Activated naive CD4-positive, alpha-beta T cell treated with anti-CD3 and anti-CD28 coated beads for 36 hours (primary cell): ENCODE measurements at regions of chr1 and their contacts with region 1.

Region 1: DNA sequence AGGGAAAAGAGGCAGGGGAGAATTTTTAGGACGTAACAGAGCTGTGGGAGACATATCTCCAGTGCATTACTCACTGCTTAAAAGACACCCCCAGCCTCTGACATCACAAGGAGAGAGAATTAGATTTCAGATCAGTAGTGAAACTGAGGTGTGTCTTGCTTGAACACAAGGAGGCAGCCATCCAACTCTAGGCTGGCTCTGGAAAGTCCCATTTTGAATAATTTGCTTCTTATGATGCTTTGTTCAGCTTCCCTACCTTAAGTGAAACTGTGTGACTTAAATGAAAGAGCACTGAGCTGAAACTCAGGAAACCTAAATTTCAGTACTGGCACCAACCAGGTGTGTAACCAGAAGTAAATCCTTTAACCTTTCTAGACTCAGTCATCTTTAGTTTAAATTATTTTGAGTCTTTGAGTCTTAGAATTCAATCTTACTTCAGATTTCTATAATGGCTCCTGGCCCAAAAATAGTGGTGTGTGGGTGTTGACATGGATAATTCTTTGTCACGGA is 251.6 kb upstream of the SGIP1 start:
- DNase-seq: peak; percentile 89
- H3K4me3 Mint-ChIP-seq: peak overlapping the region; percentile 17
- H3K27ac Mint-ChIP-seq: peak overlapping the region; percentile 89
- H3K4me1 Mint-ChIP-seq: peaks cover 87% of the 10 kb centered on the region
- H3K27me3 Mint-ChIP-seq: no peaks in the 10 kb centered on the region

Region 2: GRCh38 chr1:64966158-64966971 is 1316.0 kb before region 1 on chr1 and contains the start of gene JAK1:
- CTCF ChIA-PET with region 1: no interaction called
- intact Hi-C with region 1: loop called (anchors 10 kb)
- DNase-seq: peak; percentile 87
- H3K4me3 Mint-ChIP-seq: peak within 1 kb of the TSS; percentile 89
- H3K27ac Mint-ChIP-seq: peak within 1 kb of the TSS; percentile 90
- H3K4me1 Mint-ChIP-seq: peaks cover 46% of the 10 kb centered on the region
- H3K27me3 Mint-ChIP-seq: no peaks in the 10 kb centered on the region
- total RNA-seq, gene JAK1: 139 to 140 TPM

Region 3: DNA sequence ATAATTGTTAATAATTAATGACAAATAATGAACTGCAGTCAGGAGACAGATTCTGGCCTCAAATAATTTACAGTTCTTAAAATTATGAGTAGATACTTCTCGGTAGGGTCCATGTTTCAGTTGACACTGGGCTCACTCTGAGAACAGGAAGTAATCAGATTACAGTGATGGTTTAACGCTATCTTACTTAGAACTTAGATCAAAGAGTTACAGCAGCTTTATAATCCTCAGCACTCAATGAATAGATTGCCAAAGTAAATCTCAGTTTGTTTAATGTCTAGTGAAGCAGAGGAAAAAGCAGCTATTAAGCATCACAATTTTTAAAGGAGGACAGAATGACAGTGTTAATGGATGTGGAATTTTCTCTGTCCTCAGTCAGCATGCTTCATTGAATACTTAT is 410.1 kb before region 1 on chr1:
- CTCF ChIA-PET with region 1: no interaction called
- intact Hi-C with region 1: no loop called
- DNase-seq: no peak
- H3K4me3 Mint-ChIP-seq: no peak overlapping the region
- H3K27ac Mint-ChIP-seq: no peak overlapping the region
- H3K4me1 Mint-ChIP-seq: no peaks in the 10 kb centered on the region
- H3K27me3 Mint-ChIP-seq: peaks cover 6% of the 10 kb centered on the region

Region 4: DNA sequence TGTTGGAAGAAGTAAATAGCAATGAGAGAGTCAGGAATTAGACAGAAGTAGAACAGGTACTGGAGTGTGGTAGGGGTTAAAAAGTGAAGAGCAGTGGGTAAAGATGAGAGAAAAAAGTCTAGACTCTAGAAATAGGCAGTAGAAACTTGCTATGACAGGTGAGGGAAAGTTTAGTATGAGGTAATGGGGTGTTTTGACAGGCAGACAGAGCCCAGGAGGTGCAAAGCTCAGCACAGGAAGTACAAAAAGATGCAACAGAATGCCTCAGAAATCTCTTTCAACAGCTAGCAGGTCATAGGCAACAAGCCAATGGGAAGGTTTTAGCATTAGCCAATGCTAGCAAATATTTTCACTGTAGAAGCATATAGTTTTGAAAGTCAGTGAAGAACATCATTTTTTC is 67.5 kb before region 1 on chr1:
- CTCF ChIA-PET with region 1: no interaction called
- intact Hi-C with region 1: loop called (anchors 2 kb)
- DNase-seq: peak; percentile 57
- H3K4me3 Mint-ChIP-seq: no peak overlapping the region
- H3K27ac Mint-ChIP-seq: peak overlapping the region; percentile 1
- H3K4me1 Mint-ChIP-seq: peaks cover 17% of the 10 kb centered on the region
- H3K27me3 Mint-ChIP-seq: no peaks in the 10 kb centered on the region

Region 5: DNA sequence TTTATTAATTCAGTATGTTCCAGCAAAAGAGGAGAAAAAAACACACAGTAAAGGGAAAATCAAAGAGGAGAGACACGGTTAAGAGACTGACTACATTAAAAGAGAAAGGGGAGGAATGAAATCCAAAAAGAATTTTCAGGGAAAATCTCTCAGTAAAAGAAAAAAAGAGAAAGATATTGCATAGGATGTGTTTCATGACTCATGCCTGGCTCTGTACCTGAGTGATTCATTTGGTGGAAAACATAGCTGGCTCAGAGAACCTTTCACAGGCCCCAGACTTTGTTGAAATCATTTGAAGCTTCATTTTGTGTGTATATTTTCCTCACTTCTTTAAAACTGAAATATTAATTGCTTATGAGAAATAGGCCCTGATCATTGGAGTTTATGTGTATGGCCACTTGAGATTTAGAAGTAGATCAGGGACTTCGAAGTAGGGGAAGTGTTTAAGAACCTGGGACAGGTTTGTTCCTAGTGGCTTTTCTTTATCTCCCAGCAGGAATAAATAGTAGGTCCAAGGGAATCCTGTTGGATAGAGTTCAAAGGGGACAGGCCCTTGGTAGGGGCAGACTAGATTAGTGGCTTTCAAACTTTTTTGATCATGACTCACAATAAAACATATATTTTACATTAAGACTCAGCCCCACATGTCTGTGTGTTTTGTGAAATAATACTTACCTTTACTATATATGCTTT is 12.4 kb after region 1 on chr1:
- CTCF ChIA-PET with region 1: interaction called, 8 read pairs
- intact Hi-C with region 1: loop called (anchors 1 kb)
- DNase-seq: peak; percentile 44
- H3K4me3 Mint-ChIP-seq: no peak overlapping the region
- H3K27ac Mint-ChIP-seq: peak overlapping the region; percentile 46
- H3K4me1 Mint-ChIP-seq: peaks cover 43% of the 10 kb centered on the region
- H3K27me3 Mint-ChIP-seq: no peaks in the 10 kb centered on the region

Region 6: GRCh38 chr1:66350001-66350547 is 67.7 kb after region 1 on chr1:
- CTCF ChIA-PET with region 1: interaction called, 5 read pairs
- intact Hi-C with region 1: loop called (anchors 1 kb)
- DNase-seq: peak; percentile 80
- H3K4me3 Mint-ChIP-seq: peak overlapping the region; percentile 33
- H3K27ac Mint-ChIP-seq: peak overlapping the region; percentile 90
- H3K4me1 Mint-ChIP-seq: peaks cover 92% of the 10 kb centered on the region
- H3K27me3 Mint-ChIP-seq: no peaks in the 10 kb centered on the region

Region 7: GRCh38 chr1:66446261-66447001 is 164.0 kb after region 1 on chr1:
- CTCF ChIA-PET with region 1: interaction called, 10 read pairs
- intact Hi-C with region 1: loop called (anchors 1 kb)
- DNase-seq: peak; percentile 45
- H3K4me3 Mint-ChIP-seq: peak overlapping the region; percentile 74
- H3K27ac Mint-ChIP-seq: peak overlapping the region; percentile 92
- H3K4me1 Mint-ChIP-seq: peaks cover 26% of the 10 kb centered on the region
- H3K27me3 Mint-ChIP-seq: peaks cover 5% of the 10 kb centered on the region

Region 8: DNA sequence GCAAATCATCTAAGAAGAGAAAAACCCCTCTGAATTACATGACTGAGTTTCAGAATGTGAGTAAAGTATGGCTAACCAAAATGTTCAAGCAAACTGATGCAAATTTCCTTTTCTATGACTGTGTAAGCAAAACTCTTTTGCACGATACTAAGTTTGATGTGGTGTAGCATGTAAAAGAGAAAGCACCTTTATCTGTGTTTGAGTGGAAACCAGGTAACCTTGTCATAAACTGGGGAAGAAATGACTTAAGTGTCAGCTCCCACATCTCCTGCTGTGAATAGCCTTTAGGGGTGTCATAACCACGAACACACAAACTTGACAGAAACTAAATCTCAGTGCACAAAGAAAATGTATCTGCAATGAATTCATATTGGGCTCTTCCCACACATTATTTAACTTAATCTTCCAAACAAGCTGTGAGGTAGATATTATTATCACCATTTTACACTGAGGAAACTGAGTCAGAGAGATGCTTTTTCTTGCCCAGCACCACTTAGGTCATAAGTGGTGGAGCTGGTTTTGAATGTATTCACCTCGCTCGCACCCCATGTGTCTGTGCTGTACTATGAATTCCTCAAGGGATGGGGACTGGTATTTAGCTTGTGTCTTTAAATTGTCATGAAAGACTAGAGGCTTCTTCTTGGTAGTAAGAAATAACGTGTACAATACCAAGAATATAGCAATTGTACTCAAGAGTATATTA is 992.4 kb after region 1 on chr1:
- CTCF ChIA-PET with region 1: no interaction called
- intact Hi-C with region 1: loop called (anchors 1 kb)
- DNase-seq: peak; percentile 55
- H3K4me3 Mint-ChIP-seq: no peak overlapping the region
- H3K27ac Mint-ChIP-seq: peak overlapping the region; percentile 90
- H3K4me1 Mint-ChIP-seq: peaks cover 55% of the 10 kb centered on the region
- H3K27me3 Mint-ChIP-seq: no peaks in the 10 kb centered on the region